ENCODE measurements at regions of chr20 and their contacts with region 1.

Region 1: GRCh38 chr20:17909869-17910321 is 58.7 kb downstream of the SNX5 start:
- DNase-seq: no peak
- ATAC-seq: peak; percentile 13

Region 2: GRCh38 chr20:18066421-18067336 is 156.8 kb after region 1 on chr20:
- intact Hi-C with region 1: loop called (anchors 5 kb)
- DNase-seq: no peak
- ATAC-seq: no peak